HEK293 (cell line): ENCODE measurements at regions of chr11 and their contacts with region 1.

Region 1: DNA sequence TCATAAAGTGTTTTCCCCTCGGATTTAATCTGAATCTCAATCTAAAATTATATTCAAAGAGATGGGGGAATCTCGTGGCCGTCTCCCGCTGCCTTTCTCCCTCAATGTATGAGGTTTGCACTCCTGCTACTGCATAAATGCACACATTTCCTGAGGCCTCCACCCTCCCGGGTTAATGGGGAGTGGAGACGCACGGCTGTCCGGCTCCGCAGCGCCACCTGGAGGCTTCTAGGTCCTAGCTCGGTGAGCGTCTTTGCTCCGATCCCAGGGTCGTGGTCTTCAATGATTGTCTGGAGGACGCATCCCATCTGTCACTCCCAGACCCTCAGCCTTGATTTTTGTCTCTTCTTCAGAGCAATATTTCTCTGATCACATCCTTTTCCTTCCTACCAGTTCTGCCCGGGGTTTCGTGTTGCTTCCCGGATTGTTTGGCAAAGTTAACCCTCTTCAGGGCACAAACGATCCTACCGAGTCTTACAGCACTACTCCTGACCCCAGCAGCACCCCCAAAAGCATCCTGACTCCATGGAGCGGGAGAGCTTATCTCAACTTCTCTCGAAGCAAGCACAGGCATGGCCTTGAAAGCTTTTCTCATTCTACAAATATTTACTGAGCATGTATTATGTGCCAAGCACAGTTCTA is at the start of gene LMO1:
- H3K4me3 ChIP-seq: peak within 1 kb of the TSS; percentile 44
- H3K27ac ChIP-seq: no peak within 1 kb of the TSS; the same call in 1 of the 2 replicates
- H3K4me1 ChIP-seq: no peaks in the 10 kb centered on the region
- CTCF ChIP-seq: peak; percentile 67

Region 2: GRCh38 chr11:8192016-8192895 is 71.6 kb before region 1 on chr11:
- CTCF ChIA-PET with region 1: interaction called, 13 read pairs
- POLR2A ChIA-PET with region 1: no interaction called
- H3K4me3 ChIP-seq: no peak overlapping the region
- H3K27ac ChIP-seq: no peak overlapping the region
- H3K4me1 ChIP-seq: no peaks in the 10 kb centered on the region
- CTCF ChIP-seq: peak; percentile 61

Region 3: DNA sequence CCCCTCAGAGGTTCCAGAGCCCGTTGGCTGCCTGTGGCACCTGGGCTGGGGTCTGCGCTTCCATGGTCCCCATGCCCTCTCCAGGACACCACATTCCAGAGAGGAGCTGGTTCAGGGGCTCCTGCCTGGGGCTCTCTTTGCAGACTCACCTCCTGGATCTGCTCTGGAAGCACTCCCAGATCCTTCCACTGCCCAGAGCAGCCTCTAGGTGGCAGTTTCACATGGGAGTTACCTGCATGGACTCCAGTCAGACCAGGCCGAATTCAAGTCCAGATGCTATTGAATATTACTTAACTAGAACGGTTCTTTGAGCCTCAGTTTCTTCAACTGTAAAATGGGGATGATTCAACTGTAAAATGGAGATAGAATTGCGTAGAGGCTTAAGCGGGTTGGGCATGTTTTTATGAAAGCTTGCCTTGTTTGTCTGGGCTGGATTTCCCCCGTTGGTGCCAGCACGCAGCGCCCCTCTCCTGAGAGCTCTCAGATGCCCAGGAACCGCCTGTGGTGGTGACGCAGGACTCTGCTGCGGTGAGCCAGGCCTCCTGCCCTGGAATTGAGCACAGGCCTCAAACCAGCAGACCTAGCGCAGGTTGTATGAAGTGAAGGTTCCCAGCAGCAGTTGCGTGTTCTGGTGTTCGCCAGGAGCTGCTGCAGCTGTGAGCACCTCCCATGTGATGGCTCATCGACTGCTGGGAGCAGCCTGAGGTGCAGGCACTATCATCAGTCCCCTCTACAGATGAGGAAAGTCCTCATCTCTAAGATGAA is 44.5 kb before region 1 on chr11:
- CTCF ChIA-PET with region 1: interaction called, 29 read pairs
- POLR2A ChIA-PET with region 1: no interaction called
- H3K4me3 ChIP-seq: no peak overlapping the region
- H3K27ac ChIP-seq: no peak overlapping the region
- H3K4me1 ChIP-seq: no peaks in the 10 kb centered on the region
- CTCF ChIP-seq: no peak

Region 4: DNA sequence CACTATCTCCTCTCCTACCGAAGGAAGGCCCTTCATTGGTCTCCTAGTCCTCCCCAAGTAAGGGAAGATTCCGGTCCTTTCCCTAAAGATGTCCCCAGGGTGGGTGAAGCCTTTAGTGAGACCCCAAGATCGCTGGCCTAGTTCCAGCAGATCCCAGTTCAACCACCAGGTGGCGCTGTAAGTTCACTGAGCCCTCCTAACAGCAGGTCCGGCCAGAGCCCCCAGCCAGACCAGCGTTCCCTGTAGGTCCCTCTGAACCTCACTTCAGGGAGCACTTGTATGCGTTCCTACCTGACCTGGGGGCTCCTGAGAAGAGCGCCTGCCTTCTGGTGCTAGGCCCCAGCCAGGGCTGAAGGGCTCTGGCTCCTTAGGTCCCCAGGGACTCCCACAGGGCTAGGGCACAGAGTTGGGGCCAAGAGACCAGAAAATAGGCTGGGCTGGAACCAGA is 38.3 kb before region 1 on chr11:
- CTCF ChIA-PET with region 1: interaction called, 75 read pairs
- POLR2A ChIA-PET with region 1: interaction called, 10 read pairs
- H3K4me3 ChIP-seq: no peak overlapping the region
- H3K27ac ChIP-seq: no peak overlapping the region
- H3K4me1 ChIP-seq: peaks cover 2% of the 10 kb centered on the region; the same call in 1 of the 2 replicates
- CTCF ChIP-seq: peak; percentile 71; the same call in 1 of the 2 replicates

Region 5: DNA sequence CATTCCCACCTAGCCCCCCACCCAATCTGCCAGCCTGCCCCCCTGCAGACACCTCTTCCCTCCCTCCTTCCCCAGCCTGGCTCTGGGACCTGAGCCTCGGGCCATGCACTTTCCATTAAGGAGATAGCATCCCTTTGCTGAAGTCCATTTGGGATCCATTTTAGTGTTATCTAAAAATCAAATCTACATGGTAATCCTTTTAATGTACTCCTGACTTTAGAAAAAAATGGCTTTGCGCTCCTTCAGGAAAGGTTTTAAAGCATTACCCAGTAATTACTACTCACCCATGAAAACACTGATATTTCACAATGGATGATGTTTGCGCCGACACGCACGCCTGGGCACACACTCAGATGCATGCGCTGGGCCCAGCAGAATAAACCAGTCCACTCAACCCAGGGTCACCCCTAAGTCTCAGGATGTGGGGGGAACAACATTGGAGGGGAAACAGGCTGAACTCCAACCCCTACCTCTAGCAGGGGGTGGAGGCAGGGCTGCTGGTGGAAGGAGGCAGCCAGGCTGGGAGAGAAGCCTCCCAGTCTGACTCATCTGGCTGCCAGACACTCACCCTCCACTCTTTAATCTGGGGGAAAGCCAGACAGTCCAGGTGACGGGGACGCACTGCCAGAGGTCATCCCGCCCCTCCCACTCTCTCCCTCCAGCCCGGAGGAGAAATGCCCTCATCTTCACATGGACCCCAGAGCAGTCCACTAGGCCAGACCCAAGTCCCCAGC is 30.0 kb before region 1 on chr11:
- CTCF ChIA-PET with region 1: interaction called, 75 read pairs
- POLR2A ChIA-PET with region 1: interaction called, 10 read pairs
- H3K4me3 ChIP-seq: no peak overlapping the region
- H3K27ac ChIP-seq: no peak overlapping the region
- H3K4me1 ChIP-seq: peaks cover 2% of the 10 kb centered on the region; the same call in 1 of the 2 replicates
- CTCF ChIP-seq: no peak

Region 6: DNA sequence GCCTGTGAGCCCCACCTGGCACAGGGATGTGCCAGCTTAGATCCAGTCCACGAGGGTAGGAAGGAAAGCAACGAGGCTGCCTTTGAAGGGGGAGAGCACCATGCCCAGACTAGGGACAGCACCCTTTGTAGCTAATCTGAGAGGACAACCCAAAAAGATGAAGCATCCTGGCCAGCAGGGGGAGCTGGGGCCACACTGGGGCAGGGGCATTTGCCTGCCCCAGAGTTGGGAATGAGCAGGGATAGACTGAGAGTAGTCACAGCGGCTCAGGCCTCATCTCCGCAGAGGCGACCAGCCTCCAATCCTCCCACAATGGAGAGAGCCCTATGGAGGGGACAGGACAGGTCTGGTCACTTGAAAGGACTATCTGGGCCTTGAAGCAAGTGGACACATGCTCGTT is 16.6 kb before region 1 on chr11:
- CTCF ChIA-PET with region 1: interaction called, 40 read pairs
- POLR2A ChIA-PET with region 1: interaction called, 3 read pairs
- H3K4me3 ChIP-seq: no peak overlapping the region
- H3K27ac ChIP-seq: no peak overlapping the region
- H3K4me1 ChIP-seq: no peaks in the 10 kb centered on the region
- CTCF ChIP-seq: no peak

Region 7: GRCh38 chr11:8277691-8278090 is 13.8 kb after region 1 on chr11:
- CTCF ChIA-PET with region 1: interaction called, 29 read pairs
- POLR2A ChIA-PET with region 1: no interaction called
- H3K4me3 ChIP-seq: no peak overlapping the region
- H3K27ac ChIP-seq: no peak overlapping the region
- H3K4me1 ChIP-seq: no peaks in the 10 kb centered on the region
- CTCF ChIP-seq: no peak